GM12878 (cell line): ENCODE measurements at regions of chr7 and their contacts with region 1.

Region 1: GRCh38 chr7:90857603-90858002 is 261.5 kb downstream of the CDK14 start:
- DNase-seq: no peak
- ATAC-seq: peak; percentile 44
- H3K4me3 ChIP-seq: no peak overlapping the region
- H3K27ac ChIP-seq: no peak overlapping the region
- H3K4me1 ChIP-seq: peaks cover 6% of the 10 kb centered on the region
- H3K27me3 ChIP-seq: no peaks in the 10 kb centered on the region
- CTCF ChIP-seq: peak in 1 of 3 experiments; percentile 35; a peak in 1 of 6 replicates
- EP300 ChIP-seq: no peak
- POLR2A ChIP-seq: no peak
- RAD21 ChIP-seq: no peak

Region 2: DNA sequence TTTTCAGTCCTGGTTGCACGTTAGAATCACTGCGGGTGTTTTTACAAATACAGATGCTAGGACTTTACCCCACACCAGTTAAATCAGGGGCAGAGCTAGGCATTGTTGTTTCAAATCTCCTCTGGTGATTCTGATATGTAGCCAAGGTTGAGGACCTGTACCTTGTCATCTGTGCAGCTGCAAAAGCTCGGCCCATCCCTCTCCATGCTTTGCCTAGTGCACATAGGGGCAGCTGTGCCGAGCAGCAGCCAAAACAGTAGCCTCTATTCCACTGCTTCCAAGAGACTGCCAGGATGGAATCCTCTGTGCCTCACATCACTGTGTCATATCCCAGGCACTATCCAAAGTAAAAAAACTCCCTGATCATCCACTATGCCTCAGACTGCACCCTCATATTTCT is 80.1 kb before region 1 on chr7:
- CTCF ChIA-PET with region 1: no interaction called
- POLR2A ChIA-PET with region 1: no interaction called
- RAD21 ChIA-PET with region 1: interaction called, 7 read pairs
- SMC1A ChIA-PET with region 1: interaction called, 10 read pairs
- in situ Hi-C with region 1: no loop called
- intact Hi-C with region 1: no loop called
- DNase-seq: no peak
- ATAC-seq: peak; percentile 63
- H3K4me3 ChIP-seq: peak overlapping the region; percentile 65; the same call in 1 of the 2 replicates
- H3K27ac ChIP-seq: peak overlapping the region; percentile 77
- H3K4me1 ChIP-seq: peaks cover 35% of the 10 kb centered on the region
- H3K27me3 ChIP-seq: no peaks in the 10 kb centered on the region
- CTCF ChIP-seq: no peak
- EP300 ChIP-seq: no peak
- POLR2A ChIP-seq: no peak
- RAD21 ChIP-seq: no peak

Region 3: GRCh38 chr7:90816511-90817142 is 41.0 kb before region 1 on chr7:
- CTCF ChIA-PET with region 1: interaction called, 5 read pairs
- POLR2A ChIA-PET with region 1: no interaction called
- RAD21 ChIA-PET with region 1: interaction called, 7 read pairs
- SMC1A ChIA-PET with region 1: interaction called, 17 read pairs
- in situ Hi-C with region 1: no loop called
- intact Hi-C with region 1: no loop called
- DNase-seq: peak; percentile 85
- ATAC-seq: peak; percentile 99
- H3K4me3 ChIP-seq: no peak overlapping the region
- H3K27ac ChIP-seq: peak overlapping the region; percentile 52
- H3K4me1 ChIP-seq: 0 out of 2 replicates have a peak, but pooled peaks cover 4% of the 10 kb centered on the region
- H3K27me3 ChIP-seq: no peaks in the 10 kb centered on the region
- CTCF ChIP-seq: no peak
- EP300 ChIP-seq: peak in 1 of 2 experiments; percentile 93; a peak in 3 of 4 replicates
- POLR2A ChIP-seq: no peak
- RAD21 ChIP-seq: no peak

Region 4: DNA sequence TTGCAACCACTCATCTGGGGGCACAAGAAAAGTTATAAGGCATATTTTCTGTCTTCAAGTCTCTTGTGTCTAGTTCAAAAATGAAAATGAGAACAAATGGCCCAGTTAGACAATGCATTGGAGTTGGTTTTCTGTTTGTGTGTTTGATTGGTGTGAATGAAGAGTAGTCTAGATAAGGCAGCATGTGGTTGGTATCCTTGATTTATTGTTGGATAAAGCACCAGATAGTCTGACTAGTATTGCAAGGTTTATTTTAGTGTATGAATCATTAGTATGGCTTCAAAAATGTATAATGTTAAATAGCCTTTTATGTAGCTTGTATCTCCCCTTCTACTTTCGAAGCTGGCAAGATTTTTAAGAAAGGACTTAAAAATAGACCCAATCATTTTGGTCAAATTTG is 24.2 kb before region 1 on chr7:
- CTCF ChIA-PET with region 1: no interaction called
- POLR2A ChIA-PET with region 1: no interaction called
- RAD21 ChIA-PET with region 1: no interaction called
- SMC1A ChIA-PET with region 1: no interaction called
- in situ Hi-C with region 1: no loop called
- intact Hi-C with region 1: no loop called
- DNase-seq: no peak
- ATAC-seq: no peak
- H3K4me3 ChIP-seq: no peak overlapping the region
- H3K27ac ChIP-seq: no peak overlapping the region
- H3K4me1 ChIP-seq: no peaks in the 10 kb centered on the region
- H3K27me3 ChIP-seq: no peaks in the 10 kb centered on the region
- CTCF ChIP-seq: no peak
- EP300 ChIP-seq: no peak
- POLR2A ChIP-seq: no peak
- RAD21 ChIP-seq: no peak

Region 5: DNA sequence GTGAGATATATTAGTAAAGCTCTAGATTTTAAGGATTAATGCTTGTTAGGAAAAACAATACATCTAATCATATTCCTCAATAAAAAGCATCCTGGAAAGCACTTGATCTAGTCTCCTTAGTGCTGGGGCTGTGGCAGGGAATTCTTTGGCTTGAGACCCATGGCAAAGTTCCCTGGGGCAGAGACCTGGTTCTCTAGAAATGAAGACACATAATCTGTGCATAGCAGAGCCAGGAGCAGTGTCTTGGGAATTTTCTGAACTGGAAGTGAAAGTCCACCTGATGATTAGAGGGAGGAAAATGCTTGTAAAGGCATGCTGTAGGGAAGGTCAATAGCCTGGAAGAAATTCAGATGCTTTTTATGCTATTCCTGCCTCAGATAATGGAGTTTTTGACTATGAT is 14.1 kb before region 1 on chr7:
- CTCF ChIA-PET with region 1: interaction called, 35 read pairs
- POLR2A ChIA-PET with region 1: no interaction called
- RAD21 ChIA-PET with region 1: interaction called, 3 read pairs
- SMC1A ChIA-PET with region 1: interaction called, 27 read pairs
- in situ Hi-C with region 1: no loop called
- intact Hi-C with region 1: no loop called
- DNase-seq: no peak
- ATAC-seq: no peak
- H3K4me3 ChIP-seq: no peak overlapping the region
- H3K27ac ChIP-seq: no peak overlapping the region
- H3K4me1 ChIP-seq: no peaks in the 10 kb centered on the region
- H3K27me3 ChIP-seq: no peaks in the 10 kb centered on the region
- CTCF ChIP-seq: no peak
- EP300 ChIP-seq: no peak
- POLR2A ChIP-seq: no peak
- RAD21 ChIP-seq: no peak

Region 6: GRCh38 chr7:90869335-90869734 is 11.7 kb after region 1 on chr7:
- CTCF ChIA-PET with region 1: interaction called, 4 read pairs
- POLR2A ChIA-PET with region 1: interaction called, 4 read pairs
- RAD21 ChIA-PET with region 1: no interaction called
- SMC1A ChIA-PET with region 1: interaction called, 10 read pairs
- in situ Hi-C with region 1: no loop called
- intact Hi-C with region 1: no loop called
- DNase-seq: no peak
- ATAC-seq: no peak
- H3K4me3 ChIP-seq: no peak overlapping the region
- H3K27ac ChIP-seq: no peak overlapping the region
- H3K4me1 ChIP-seq: no peaks in the 10 kb centered on the region
- H3K27me3 ChIP-seq: no peaks in the 10 kb centered on the region
- CTCF ChIP-seq: no peak
- EP300 ChIP-seq: no peak
- POLR2A ChIP-seq: no peak
- RAD21 ChIP-seq: no peak

Region 7: DNA sequence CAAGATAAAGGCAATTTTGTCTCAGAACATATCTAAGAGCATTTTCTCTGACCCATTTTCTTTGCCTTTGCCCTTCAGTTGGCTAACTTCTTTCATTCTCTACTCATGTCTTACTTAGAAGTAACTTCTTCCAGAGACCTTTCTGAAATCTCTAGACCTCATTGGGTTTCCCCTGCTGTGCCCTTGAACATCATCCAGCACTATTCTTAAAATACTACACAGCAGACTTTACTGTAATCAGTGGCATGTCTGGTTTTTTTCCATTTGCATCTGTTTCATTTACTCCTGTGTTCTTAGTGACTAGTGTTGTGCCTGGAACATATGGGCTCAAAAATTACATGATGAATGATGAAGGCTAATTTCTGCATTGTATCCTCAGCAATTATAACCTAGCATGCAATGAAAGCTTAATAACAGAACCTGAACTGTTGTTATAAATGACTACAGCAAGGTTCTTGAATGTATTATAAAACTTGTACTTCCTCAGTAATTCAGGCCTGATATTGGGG is 40.4 kb after region 1 on chr7:
- CTCF ChIA-PET with region 1: no interaction called
- POLR2A ChIA-PET with region 1: no interaction called
- RAD21 ChIA-PET with region 1: no interaction called
- SMC1A ChIA-PET with region 1: no interaction called
- in situ Hi-C with region 1: no loop called
- intact Hi-C with region 1: no loop called
- DNase-seq: peak; percentile 8
- ATAC-seq: peak; percentile 74
- H3K4me3 ChIP-seq: no peak overlapping the region
- H3K27ac ChIP-seq: no peak overlapping the region
- H3K4me1 ChIP-seq: no peaks in the 10 kb centered on the region
- H3K27me3 ChIP-seq: no peaks in the 10 kb centered on the region
- CTCF ChIP-seq: no peak
- EP300 ChIP-seq: no peak
- POLR2A ChIP-seq: no peak
- RAD21 ChIP-seq: no peak

Region 8: DNA sequence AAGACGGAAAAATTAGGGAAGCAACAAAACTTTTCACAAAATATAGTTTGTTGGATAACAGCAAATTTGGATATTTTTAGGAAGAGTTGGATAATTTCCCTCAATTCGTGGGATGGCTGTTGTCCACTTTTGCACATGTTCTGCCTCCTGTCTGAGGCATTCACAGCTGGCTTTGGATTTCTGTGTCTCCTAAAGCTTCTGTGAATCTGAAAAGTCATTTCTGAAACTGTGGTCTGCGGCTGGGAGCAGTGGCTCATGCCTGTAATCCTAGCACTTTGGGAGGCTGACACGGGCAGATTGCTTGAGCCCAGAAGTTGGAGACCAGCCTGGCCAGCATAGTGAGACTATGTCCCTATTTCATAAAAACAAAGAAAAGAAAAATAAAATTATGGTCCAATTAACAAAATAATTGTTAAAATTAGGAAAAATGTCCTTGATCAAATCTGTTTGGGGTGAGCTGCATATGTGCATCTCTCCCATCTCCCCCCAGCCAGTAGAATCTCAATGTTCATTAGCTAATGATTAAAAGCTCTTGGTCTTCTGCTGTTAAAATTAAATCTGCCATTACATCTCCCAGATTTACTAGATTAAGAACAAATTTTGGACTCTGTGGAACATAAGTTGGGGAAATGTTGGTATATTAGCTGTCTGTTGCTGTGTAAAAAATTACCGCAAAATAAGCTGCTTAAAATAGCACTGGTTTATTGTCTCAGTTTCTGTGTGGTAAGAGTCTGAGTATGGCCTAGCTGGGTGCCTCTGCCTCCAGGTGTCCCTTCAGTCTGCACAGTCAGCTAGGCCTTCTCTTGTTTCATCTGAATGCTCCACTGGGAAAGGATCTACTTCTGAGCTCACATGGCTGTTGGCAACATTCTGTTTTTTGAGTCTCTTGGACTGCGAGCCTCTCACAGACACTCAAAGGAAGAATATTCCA is 74.6 kb after region 1 on chr7:
- CTCF ChIA-PET with region 1: interaction called, 3 read pairs
- POLR2A ChIA-PET with region 1: no interaction called
- RAD21 ChIA-PET with region 1: interaction called, 10 read pairs
- SMC1A ChIA-PET with region 1: interaction called, 11 read pairs
- in situ Hi-C with region 1: no loop called
- intact Hi-C with region 1: loop called (anchors 5 kb)
- DNase-seq: peak; percentile 73
- ATAC-seq: peak; percentile 98
- H3K4me3 ChIP-seq: no peak overlapping the region; the same call in none of the 2 replicates
- H3K27ac ChIP-seq: peak overlapping the region; percentile 54
- H3K4me1 ChIP-seq: peaks cover 22% of the 10 kb centered on the region
- H3K27me3 ChIP-seq: no peaks in the 10 kb centered on the region
- CTCF ChIP-seq: peak in 2 of 3 experiments; percentile 5 to 44; a peak in 2 of 6 replicates
- EP300 ChIP-seq: no peak; a peak in 1 of 4 replicates
- POLR2A ChIP-seq: no peak
- RAD21 ChIP-seq: peak; percentile 58

Region 9: GRCh38 chr7:90938371-90938770 is 80.8 kb after region 1 on chr7:
- CTCF ChIA-PET with region 1: no interaction called
- POLR2A ChIA-PET with region 1: no interaction called
- RAD21 ChIA-PET with region 1: interaction called, 10 read pairs
- SMC1A ChIA-PET with region 1: interaction called, 11 read pairs
- in situ Hi-C with region 1: no loop called
- intact Hi-C with region 1: loop called (anchors 5 kb)
- DNase-seq: no peak
- ATAC-seq: no peak
- H3K4me3 ChIP-seq: no peak overlapping the region
- H3K27ac ChIP-seq: no peak overlapping the region
- H3K4me1 ChIP-seq: peaks cover under 1% of the 10 kb centered on the region; the same call in 1 of the 2 replicates
- H3K27me3 ChIP-seq: no peaks in the 10 kb centered on the region
- CTCF ChIP-seq: no peak
- EP300 ChIP-seq: no peak
- POLR2A ChIP-seq: no peak
- RAD21 ChIP-seq: no peak